ENCODE measurements at regions of chr5 and their contacts with region 1.

Region 1: GRCh38 chr5:127313847-127314473 is 23.4 kb downstream of the MEGF10 start:
- DNase-seq: peak; percentile 39
- H3K4me3 Mint-ChIP-seq: no peak overlapping the region
- H3K27ac Mint-ChIP-seq: no peak overlapping the region
- H3K4me1 Mint-ChIP-seq: peaks cover 4% of the 10 kb centered on the region
- H3K27me3 Mint-ChIP-seq: peaks cover 19% of the 10 kb centered on the region

Region 2: DNA sequence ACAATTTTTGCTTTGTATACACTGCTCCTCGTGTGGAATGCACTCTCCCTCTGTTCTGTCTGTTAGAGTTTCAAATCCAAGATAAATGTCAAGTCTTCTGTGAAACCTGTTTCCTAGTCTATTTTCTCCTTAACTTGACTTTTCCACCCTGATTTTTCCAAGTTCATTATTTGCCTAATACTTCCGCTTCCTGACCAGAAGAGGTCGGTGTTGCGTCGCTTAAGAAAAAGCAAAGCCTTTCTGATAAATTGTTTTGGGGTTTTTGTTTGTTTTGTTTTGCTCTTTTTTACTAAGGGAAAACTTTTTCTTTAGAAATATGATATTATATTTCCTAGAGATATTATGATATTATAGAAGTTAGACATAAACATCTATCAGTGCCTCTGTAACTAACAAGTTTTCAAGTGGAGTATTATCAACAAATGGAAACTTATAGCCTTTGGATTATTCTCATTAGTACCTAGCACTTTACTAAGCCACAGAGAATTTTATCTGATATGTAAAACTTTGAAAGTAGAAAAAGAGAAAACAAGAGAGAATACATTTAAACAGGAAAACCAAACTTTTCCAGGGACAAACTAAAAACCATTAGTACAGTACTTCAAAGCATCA is 657.5 kb before region 1 on chr5:
- intact Hi-C with region 1: loop called (anchors 1 kb)
- DNase-seq: no peak
- H3K4me3 Mint-ChIP-seq: no peak overlapping the region
- H3K27ac Mint-ChIP-seq: no peak overlapping the region
- H3K4me1 Mint-ChIP-seq: peaks cover 8% of the 10 kb centered on the region
- H3K27me3 Mint-ChIP-seq: peaks cover 10% of the 10 kb centered on the region

Region 3: DNA sequence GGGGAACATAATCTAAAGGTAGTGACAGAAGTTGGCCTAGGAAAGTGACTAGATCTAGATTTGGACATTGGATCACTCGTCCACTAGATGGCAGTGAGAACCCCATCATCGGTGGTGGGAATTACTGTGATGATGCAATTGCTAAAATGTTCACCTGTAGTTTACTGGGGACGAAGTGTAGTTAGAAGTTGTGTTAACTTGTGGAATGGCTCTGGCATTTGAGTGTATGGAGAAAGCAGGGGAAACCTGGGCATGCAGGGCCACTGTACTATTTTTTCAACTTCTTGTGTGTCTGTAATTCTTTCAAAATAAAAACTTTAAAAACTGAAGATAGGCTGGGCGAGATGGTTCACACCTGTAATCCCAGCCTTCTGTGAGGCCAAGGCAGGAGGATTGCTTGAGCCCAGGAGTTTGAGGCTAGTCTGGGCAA is 637.8 kb before region 1 on chr5:
- intact Hi-C with region 1: loop called (anchors 1 kb)
- DNase-seq: peak; percentile 52
- H3K4me3 Mint-ChIP-seq: no peak overlapping the region
- H3K27ac Mint-ChIP-seq: peak overlapping the region; percentile 8
- H3K4me1 Mint-ChIP-seq: peaks cover 6% of the 10 kb centered on the region
- H3K27me3 Mint-ChIP-seq: peaks cover 3% of the 10 kb centered on the region

Region 4: DNA sequence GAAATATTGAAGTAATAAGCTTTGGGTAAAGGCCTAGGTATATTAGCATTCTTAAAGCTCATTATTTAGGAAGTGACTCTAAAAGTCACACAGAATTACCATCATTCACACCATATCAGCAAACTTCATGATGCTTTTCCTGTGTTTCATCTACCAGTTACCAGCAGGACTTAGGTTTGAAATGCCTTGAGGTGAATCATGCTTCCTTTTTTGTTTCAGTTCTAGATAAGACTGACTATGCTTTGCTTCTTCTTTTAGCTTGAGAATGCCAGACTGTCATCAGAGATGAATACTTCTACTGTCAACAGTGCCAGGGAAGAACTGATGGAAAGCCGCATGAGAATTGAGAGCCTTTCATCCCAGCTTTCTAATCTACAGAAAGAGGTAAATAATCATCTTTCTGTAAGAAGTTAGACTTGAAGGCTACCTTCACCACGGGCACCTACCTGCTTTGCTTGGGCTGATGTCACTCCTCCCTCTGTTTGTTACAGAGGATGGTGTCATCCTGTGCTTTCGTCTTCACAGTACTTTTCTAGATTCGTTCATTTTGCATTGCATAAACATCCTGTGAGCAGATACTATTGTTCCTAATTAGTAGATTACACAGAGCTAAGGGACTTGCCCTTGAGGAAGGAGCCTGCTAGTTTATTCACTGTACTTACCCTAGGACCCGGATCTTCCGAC is 502.3 kb before region 1 on chr5:
- intact Hi-C with region 1: loop called (anchors 2 kb)
- DNase-seq: peak; percentile 50
- H3K4me3 Mint-ChIP-seq: peak overlapping the region; percentile 81
- H3K27ac Mint-ChIP-seq: peak overlapping the region; percentile 90
- H3K4me1 Mint-ChIP-seq: peaks cover 69% of the 10 kb centered on the region
- H3K27me3 Mint-ChIP-seq: no peaks in the 10 kb centered on the region

Region 5: GRCh38 chr5:127229185-127229889 is 84.6 kb before region 1 on chr5:
- intact Hi-C with region 1: loop called (anchors 5 kb)
- DNase-seq: peak; percentile 34
- H3K4me3 Mint-ChIP-seq: peak overlapping the region; percentile 38
- H3K27ac Mint-ChIP-seq: no peak overlapping the region
- H3K4me1 Mint-ChIP-seq: peaks cover 5% of the 10 kb centered on the region
- H3K27me3 Mint-ChIP-seq: peaks cover 1% of the 10 kb centered on the region

Region 6: GRCh38 chr5:127290019-127290945 is 23.7 kb before region 1 on chr5 and contains the start of gene MEGF10:
- intact Hi-C with region 1: loop called (anchors 1 kb)
- DNase-seq: no peak
- H3K4me3 Mint-ChIP-seq: no peak within 1 kb of the TSS
- H3K27ac Mint-ChIP-seq: no peak within 1 kb of the TSS
- H3K4me1 Mint-ChIP-seq: no peaks in the 10 kb centered on the region
- H3K27me3 Mint-ChIP-seq: peaks cover 72% of the 10 kb centered on the region
- total RNA-seq, gene MEGF10: not detected in 2 replicates

Region 7: GRCh38 chr5:127326428-127326827 is 12.5 kb after region 1 on chr5:
- intact Hi-C with region 1: no loop called
- DNase-seq: no peak
- H3K4me3 Mint-ChIP-seq: no peak overlapping the region
- H3K27ac Mint-ChIP-seq: no peak overlapping the region
- H3K4me1 Mint-ChIP-seq: no peaks in the 10 kb centered on the region
- H3K27me3 Mint-ChIP-seq: peaks cover 15% of the 10 kb centered on the region

Region 8: GRCh38 chr5:127492854-127493738 is 179.1 kb after region 1 on chr5:
- intact Hi-C with region 1: loop called (anchors 10 kb)
- DNase-seq: no peak
- H3K4me3 Mint-ChIP-seq: no peak overlapping the region
- H3K27ac Mint-ChIP-seq: no peak overlapping the region
- H3K4me1 Mint-ChIP-seq: no peaks in the 10 kb centered on the region
- H3K27me3 Mint-ChIP-seq: peaks cover 34% of the 10 kb centered on the region